Activated CD4-positive, alpha-beta T cell treated with anti-CD3 and anti-CD28 coated beads for 36 hours (primary cell): ENCODE measurements at regions of chr1 and their contacts with region 1.

Region 1: GRCh38 chr1:197775282-197776262 is at the start of gene DENND1B:
- DNase-seq: peak; percentile 88
- ATAC-seq: peak; percentile 78
- H3K4me3 Mint-ChIP-seq: peak within 1 kb of the TSS; percentile 90
- H3K27ac Mint-ChIP-seq: peak within 1 kb of the TSS; percentile 99
- H3K4me1 Mint-ChIP-seq: peaks cover 66% of the 10 kb centered on the region
- H3K27me3 Mint-ChIP-seq: no peaks in the 10 kb centered on the region
- total RNA-seq, gene DENND1B: 9.6 to 12.6 TPM

Region 2: GRCh38 chr1:197399755-197400527 is 375.6 kb before region 1 on chr1:
- CTCF ChIA-PET with region 1: no interaction called
- POLR2A ChIA-PET with region 1: no interaction called
- intact Hi-C with region 1: loop called in 1 of 2 experiments (anchors 10 kb)
- DNase-seq: peak; percentile 26
- ATAC-seq: peak; percentile 70
- H3K4me3 Mint-ChIP-seq: no peak overlapping the region
- H3K27ac Mint-ChIP-seq: no peak overlapping the region
- H3K4me1 Mint-ChIP-seq: peaks cover 3% of the 10 kb centered on the region
- H3K27me3 Mint-ChIP-seq: peaks cover 6% of the 10 kb centered on the region

Region 3: DNA sequence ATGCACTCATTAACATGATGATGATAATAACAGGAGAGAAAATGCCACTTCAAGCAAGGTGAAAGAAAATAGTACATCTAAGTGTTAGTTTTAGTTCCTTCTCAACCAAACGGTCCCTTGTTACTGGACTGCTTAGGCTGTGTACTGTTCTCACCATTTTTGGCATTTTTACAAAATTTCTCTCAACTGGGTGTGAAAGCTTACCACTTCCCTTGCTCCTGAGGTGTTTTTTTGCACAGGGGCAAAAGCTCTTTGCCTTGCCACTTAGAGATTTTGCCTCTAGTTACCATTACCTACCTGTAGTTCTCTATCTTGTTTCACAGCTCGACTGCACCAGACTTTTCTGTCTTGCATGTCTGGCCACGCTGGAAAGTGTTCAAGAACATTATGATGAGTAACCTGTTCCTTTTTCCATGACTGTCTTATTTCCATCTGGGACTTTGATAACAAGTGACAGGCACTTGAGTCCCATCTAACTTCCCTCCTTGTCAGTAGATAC is 391.9 kb after region 1 on chr1:
- CTCF ChIA-PET with region 1: no interaction called
- POLR2A ChIA-PET with region 1: no interaction called
- intact Hi-C with region 1: loop called in 1 of 2 experiments (anchors 5 kb)
- DNase-seq: peak; percentile 42
- ATAC-seq: peak; percentile 18
- H3K4me3 Mint-ChIP-seq: peak overlapping the region; percentile 54
- H3K27ac Mint-ChIP-seq: peak overlapping the region; percentile 93
- H3K4me1 Mint-ChIP-seq: peaks cover 93% of the 10 kb centered on the region
- H3K27me3 Mint-ChIP-seq: no peaks in the 10 kb centered on the region

Region 4: DNA sequence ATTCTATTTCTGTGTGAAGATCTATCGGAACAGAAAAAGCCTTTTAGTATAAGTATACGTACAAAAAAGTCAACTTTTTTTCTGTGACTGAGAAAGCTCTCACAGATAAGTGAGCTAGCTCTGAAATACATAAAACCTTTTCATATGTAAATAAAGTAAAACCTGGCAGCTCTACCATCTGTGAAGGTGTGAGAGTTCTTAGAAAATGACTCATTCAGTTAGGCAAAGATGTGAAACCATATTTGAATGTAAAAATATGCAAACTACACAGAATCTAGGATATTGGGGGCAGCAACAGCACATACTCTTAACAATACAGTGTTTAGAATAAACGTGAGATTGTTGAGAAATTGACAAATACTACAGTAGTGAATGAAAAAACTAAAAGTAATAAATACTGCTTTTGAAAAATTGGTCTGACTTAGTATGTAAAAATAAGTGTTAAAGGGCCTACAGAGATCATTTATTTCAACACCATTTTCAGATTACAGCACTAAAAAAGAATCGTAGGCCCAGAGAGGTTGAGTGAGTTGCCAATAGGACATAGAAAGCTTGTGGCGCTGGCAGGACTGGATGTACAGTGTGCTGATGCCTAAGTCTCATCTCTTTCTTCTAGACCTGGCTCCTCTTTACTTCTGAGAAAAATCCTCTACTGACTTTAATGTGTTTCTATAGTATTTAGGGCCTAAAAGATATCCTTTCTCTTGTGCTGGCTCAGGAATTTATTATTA is 745.1 kb after region 1 on chr1:
- CTCF ChIA-PET with region 1: no interaction called
- POLR2A ChIA-PET with region 1: no interaction called
- intact Hi-C with region 1: loop called (anchors 5 kb)
- DNase-seq: peak; percentile 23
- ATAC-seq: peak; percentile 60
- H3K4me3 Mint-ChIP-seq: peak overlapping the region; percentile 64
- H3K27ac Mint-ChIP-seq: peak overlapping the region; percentile 90
- H3K4me1 Mint-ChIP-seq: peaks cover 76% of the 10 kb centered on the region
- H3K27me3 Mint-ChIP-seq: no peaks in the 10 kb centered on the region

Region 5: GRCh38 chr1:198676253-198676652 is 900.7 kb after region 1 on chr1:
- CTCF ChIA-PET with region 1: no interaction called
- POLR2A ChIA-PET with region 1: no interaction called
- intact Hi-C with region 1: loop called (anchors 2 to 10 kb)
- DNase-seq: peak; percentile 36
- ATAC-seq: peak; percentile 35
- H3K4me3 Mint-ChIP-seq: peak overlapping the region; percentile 73
- H3K27ac Mint-ChIP-seq: peak overlapping the region; percentile 98
- H3K4me1 Mint-ChIP-seq: peaks cover 91% of the 10 kb centered on the region
- H3K27me3 Mint-ChIP-seq: no peaks in the 10 kb centered on the region

Region 6: GRCh38 chr1:198922638-198923430 is 1147.3 kb after region 1 on chr1:
- CTCF ChIA-PET with region 1: no interaction called
- POLR2A ChIA-PET with region 1: no interaction called
- intact Hi-C with region 1: loop called in 1 of 2 experiments (anchors 5 kb)
- DNase-seq: no peak
- ATAC-seq: peak; percentile 56
- H3K4me3 Mint-ChIP-seq: no peak overlapping the region
- H3K27ac Mint-ChIP-seq: peak overlapping the region; percentile 76
- H3K4me1 Mint-ChIP-seq: peaks cover 74% of the 10 kb centered on the region
- H3K27me3 Mint-ChIP-seq: no peaks in the 10 kb centered on the region